Activated CD8-positive, alpha-beta T cell treated with anti-CD3 and anti-CD28 coated beads for 36 hours (primary cell): ENCODE measurements at regions of chr22 and their contacts with region 1.

Region 1: DNA sequence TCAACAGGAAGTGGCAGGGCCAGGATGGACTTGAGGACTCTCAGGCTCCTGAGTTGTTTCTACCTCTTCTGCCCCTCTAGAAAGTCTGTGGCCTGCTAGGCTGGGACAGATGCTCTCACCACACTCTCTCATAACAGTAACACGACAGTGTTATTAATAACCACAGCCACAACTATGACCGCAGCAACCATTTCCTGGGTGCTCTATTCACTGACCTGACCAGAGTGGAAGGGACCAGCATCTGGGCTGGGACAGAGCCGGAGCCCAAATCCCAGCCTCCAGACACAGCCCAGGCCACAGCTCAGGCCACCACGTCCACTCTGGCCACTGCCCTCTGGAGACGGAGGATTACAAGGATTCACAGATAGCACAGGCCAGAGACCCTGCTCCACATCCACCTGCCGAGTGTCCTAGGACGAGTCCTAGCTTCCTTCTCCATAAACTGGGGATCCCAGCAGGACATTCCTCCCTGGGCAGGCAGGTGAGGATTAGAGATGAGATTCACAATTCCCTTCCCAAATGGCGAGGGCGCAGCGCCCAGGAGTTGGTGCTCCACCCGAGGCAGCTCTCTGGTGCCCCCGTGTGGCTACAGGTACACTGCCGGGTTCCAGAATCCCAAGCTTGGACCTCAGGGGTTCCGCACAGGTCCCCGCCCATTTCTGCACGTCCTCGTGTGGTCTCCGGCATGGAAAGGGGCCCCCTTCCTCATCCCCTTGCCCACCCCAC is 7.0 kb downstream of the PNPLA5 start:
- DNase-seq: peak; percentile 64
- ATAC-seq: peak; percentile 63
- H3K4me3 Mint-ChIP-seq: no peak overlapping the region
- H3K27ac Mint-ChIP-seq: no peak overlapping the region
- H3K4me1 Mint-ChIP-seq: no peaks in the 10 kb centered on the region
- H3K27me3 Mint-ChIP-seq: peaks cover 13% of the 10 kb centered on the region
- CTCF ChIP-seq: peak; percentile 80

Region 2: DNA sequence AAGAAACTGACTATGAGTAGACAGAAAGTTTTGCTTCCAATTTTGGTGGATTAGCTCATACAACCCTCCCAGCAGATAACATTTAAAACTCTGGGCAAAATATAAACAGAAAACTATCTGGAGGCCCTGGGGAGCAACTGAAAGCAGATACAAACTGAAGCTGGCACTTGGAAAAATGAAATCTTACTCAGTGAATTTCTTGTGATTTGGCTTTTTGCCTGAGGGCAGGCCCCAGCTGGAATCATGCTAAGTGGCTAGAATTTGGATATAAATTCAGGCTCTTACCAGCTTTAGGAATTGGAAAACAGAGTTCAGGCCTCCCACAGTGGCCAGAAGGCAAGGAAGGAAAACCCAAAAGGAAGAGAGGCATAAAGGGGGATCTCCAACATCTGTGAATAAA is 158.4 kb before region 1 on chr22:
- CTCF ChIA-PET with region 1: no interaction called
- POLR2A ChIA-PET with region 1: no interaction called
- intact Hi-C with region 1: no loop called
- DNase-seq: no peak
- ATAC-seq: no peak
- H3K4me3 Mint-ChIP-seq: no peak overlapping the region
- H3K27ac Mint-ChIP-seq: no peak overlapping the region
- H3K4me1 Mint-ChIP-seq: no peaks in the 10 kb centered on the region
- H3K27me3 Mint-ChIP-seq: peaks cover 2% of the 10 kb centered on the region
- CTCF ChIP-seq: no peak

Region 3: GRCh38 chr22:43900206-43900605 is 15.4 kb after region 1 on chr22:
- CTCF ChIA-PET with region 1: interaction called, 17 read pairs
- POLR2A ChIA-PET with region 1: no interaction called
- intact Hi-C with region 1: no loop called
- DNase-seq: no peak
- ATAC-seq: no peak
- H3K4me3 Mint-ChIP-seq: no peak overlapping the region
- H3K27ac Mint-ChIP-seq: no peak overlapping the region
- H3K4me1 Mint-ChIP-seq: no peaks in the 10 kb centered on the region
- H3K27me3 Mint-ChIP-seq: peaks cover 3% of the 10 kb centered on the region
- CTCF ChIP-seq: no peak

Region 4: DNA sequence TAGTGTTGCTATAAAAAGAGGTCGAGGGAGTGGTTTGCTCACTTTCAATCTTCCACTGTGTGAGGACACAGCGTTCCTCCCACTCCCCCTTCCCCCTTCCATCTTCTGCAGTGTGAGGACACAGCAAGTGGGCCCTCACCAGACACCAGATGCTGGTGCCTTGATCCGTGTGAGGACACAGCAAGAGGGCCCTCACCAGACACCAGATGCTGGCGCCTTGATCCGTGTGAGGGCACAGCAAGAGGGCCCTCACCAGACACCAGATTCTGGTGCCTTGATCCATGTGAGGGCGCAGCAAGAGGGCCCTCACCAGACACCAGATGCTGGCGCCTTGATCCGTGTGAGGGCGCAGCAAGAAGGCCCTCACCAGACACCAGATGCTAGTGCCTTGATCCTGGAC is 31.1 kb after region 1 on chr22:
- CTCF ChIA-PET with region 1: interaction called, 12 read pairs
- POLR2A ChIA-PET with region 1: no interaction called
- intact Hi-C with region 1: no loop called
- DNase-seq: no peak
- ATAC-seq: no peak
- H3K4me3 Mint-ChIP-seq: no peak overlapping the region
- H3K27ac Mint-ChIP-seq: no peak overlapping the region
- H3K4me1 Mint-ChIP-seq: no peaks in the 10 kb centered on the region
- H3K27me3 Mint-ChIP-seq: peaks cover 19% of the 10 kb centered on the region
- CTCF ChIP-seq: no peak

Region 5: DNA sequence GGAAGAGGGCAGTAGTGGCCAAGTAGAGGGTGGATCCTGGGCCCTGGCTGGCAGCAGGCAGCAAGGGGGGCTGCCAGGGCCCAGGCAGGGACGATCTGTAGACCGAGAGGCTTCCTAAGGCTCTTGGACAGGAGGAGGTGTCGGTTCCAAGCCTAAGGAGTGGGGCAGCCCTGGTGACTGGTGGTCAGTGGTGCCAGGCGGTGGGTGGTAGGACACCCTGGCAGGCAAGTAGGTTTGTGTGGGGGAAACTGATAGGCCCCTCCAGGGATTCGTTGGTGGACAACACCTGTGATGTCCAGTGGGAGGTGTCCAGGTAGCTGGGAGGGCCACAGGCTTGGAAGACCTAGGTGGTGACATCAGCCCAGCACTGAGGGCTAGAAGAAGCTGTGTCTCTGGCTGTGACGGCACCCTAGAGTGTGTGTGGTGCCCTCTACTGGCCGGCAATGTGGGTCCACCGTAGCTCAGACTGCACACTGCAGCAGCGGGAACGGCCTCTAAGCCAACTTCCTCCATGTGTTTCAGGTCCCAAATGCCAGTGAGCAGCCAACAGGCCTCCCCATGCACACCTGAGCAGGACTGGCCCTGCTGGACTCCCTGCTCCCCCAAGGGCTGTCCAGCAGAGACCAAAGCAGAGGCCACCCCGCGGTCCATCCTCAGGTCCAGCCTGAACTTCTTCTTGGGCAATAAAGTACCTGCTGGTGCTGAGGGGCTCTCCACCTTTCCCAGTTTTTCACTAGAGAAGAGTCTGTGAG is 61.0 kb after region 1 on chr22:
- CTCF ChIA-PET with region 1: interaction called, 33 read pairs
- POLR2A ChIA-PET with region 1: no interaction called
- intact Hi-C with region 1: no loop called
- DNase-seq: peak; percentile 86
- ATAC-seq: peak; percentile 99
- H3K4me3 Mint-ChIP-seq: no peak overlapping the region
- H3K27ac Mint-ChIP-seq: no peak overlapping the region
- H3K4me1 Mint-ChIP-seq: no peaks in the 10 kb centered on the region
- H3K27me3 Mint-ChIP-seq: peaks cover 2% of the 10 kb centered on the region
- CTCF ChIP-seq: peak; percentile 83